Panc1 (cell line): ENCODE measurements at regions of chr7 and their contacts with region 1.

Region 1: GRCh38 chr7:48088559-48089045 is 463 bp upstream of the UPP1 start:
- DNase-seq: peak; percentile 91
- ATAC-seq: peak; percentile 72
- H3K4me3 ChIP-seq: peak overlapping the region; percentile 57 to 87
- H3K27ac ChIP-seq: peak overlapping the region; percentile 100
- H3K4me1 ChIP-seq: peaks cover 73% of the 10 kb centered on the region
- H3K27me3 ChIP-seq: no peaks in the 10 kb centered on the region
- CTCF ChIP-seq: no peak

Region 2: DNA sequence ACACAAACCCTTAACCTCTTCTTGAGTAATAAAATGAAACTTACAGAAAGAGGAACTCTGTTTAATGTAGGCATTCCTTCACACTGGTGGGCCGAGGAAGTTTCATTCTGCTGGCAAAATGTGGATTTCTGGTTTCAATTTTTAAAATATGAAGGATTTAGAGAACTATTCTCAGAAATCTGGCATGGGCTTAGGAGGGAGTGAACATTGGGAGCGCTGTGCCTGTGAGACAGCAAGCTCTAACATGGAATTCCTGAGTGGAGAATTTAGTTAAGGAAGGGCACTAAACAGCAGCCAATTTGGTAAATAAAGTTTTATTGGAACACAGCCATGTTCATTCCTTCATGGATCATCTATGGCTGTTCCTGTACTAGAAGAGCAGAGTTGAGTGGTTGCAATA is 1415.7 kb before region 1 on chr7:
- CTCF ChIA-PET with region 1: no interaction called
- POLR2A ChIA-PET with region 1: no interaction called
- in situ Hi-C with region 1: no loop called
- intact Hi-C with region 1: no loop called
- DNase-seq: no peak
- ATAC-seq: no peak
- H3K4me3 ChIP-seq: no peak overlapping the region
- H3K27ac ChIP-seq: no peak overlapping the region
- H3K4me1 ChIP-seq: no peaks in the 10 kb centered on the region
- H3K27me3 ChIP-seq: no peaks in the 10 kb centered on the region
- CTCF ChIP-seq: no peak

Region 3: DNA sequence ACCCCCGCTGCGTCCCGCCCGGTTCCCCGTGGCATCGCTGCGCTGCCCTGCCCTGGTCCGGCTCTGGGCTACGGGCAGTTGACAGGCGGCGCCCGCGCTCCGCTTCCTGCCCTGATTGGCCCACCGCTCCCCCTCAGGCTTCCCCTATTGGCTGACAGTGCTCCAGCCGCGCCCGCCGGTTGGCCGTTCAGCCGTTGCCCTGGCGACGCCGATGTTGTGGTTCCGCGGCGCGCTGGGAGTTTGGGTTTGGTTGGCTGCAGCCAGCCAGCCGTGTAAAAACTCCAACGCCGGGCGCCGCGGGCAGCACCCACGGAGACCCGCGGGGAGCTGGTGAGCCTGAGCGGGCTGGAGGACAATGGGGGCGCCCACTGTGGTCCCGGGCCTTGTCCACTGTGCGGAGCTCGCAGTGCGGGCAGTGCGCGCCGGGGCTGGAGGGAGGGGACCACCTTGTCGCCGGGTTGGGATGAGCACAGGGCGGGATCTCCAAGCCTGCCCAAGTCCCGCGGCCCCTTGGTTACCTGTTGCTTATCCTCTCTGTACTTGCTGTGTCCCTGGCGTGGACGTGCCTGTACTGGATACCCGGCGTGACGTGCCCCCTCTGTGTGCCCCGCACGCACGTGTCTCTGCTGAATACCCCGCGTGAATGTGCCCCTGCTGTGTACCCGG is 53.2 kb before region 1 on chr7 and contains the start of gene C7orf57:
- CTCF ChIA-PET with region 1: no interaction called
- POLR2A ChIA-PET with region 1: interaction called, 3 read pairs
- in situ Hi-C with region 1: no loop called
- intact Hi-C with region 1: loop called (anchors 5 kb)
- DNase-seq: peak; percentile 46
- ATAC-seq: peak; percentile 99
- H3K4me3 ChIP-seq: peak within 1 kb of the TSS; percentile 68 to 86
- H3K27ac ChIP-seq: peak within 1 kb of the TSS; percentile 14; the same call in 1 of the 2 replicates
- H3K4me1 ChIP-seq: peaks cover 14% of the 10 kb centered on the region
- H3K27me3 ChIP-seq: no peaks in the 10 kb centered on the region
- CTCF ChIP-seq: peak; percentile 73
- total RNA-seq, gene C7orf57: 3.2 TPM